Dorsolateral prefrontal cortex (tissue), 120 donors: ENCODE measurements at regions of chr6 and their contacts with region 1.

Region 1: DNA sequence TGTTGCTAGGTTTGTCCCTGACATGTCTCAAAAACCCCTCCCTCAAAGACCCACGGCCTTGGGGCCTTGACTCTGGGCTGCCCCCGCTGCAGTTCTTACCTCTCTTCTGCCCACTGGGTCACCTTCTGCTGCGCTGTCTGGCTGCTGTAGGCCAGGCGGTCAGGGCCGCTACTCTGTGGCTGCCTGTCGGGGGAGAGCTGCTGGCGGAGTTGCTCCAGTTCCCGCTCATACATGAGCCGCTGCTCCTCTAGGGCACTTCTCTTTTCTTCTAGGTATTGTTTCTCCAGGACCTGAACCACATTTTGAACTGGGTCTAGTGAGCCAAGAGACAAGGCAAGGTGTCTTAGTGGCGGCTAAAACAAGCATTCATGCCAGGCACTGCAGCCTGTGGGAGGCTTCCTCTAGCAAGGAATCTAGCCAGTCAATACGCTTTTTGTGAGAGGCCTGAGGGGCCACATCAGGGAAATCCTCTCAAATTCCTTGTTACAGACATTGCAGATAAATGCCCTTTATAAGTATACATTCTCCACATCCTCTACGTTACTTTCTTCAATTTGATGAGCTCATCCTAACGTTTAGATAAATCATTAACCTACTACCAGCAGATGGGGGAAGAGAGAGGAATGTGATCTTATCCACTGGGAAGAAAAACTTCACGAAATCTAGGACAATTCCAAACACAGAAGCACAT is 110.3 kb upstream of the NUP153 start:
- DNase-seq: no peak
- H3K4me3 ChIP-seq: no peak overlapping the region
- H3K27ac ChIP-seq: peak overlapping the region in 4 of 59 donors; percentile 1 to 20 (median 16)
- H3K27me3 ChIP-seq: no peaks in the 10 kb centered on the region
- CTCF ChIP-seq: peak in 9 of 56 donors; percentile 5 to 21 (median 10)

Region 2: DNA sequence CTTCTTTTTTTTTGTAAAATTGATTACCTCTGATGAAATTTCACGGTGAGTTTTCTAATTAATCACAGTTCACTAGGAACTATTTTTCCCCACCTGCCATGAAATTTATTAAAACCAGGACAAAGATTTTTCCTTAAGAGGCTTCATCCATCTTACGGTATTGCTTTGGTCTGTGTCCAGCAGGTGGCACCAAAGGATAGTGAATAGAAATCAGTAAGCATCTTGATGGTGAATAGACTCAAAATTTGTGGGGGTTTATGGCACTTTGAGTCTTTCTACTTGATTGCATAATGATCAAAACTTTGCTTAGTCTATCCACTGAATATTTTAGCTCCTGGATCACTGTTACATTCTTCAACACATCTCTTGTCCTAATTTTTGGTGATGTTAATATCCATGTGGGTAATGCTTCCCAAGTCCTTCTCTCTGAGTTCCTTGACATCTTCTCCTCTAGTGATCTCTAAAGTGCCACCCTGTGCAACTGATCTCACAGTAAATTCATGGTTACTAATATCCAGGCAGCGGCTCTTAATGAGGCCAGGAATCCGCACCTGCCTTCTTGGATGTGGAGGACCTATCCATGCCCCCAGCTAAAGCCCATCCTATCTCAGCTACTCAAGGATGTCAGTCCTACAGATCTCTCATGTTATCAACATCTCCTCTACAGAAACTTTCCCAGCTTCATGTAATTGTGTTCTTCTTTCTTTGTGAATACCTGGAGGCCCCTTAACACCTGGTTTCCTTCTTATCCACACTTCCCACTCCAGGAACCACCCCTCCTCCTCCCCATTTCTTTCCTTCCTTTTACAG is 660.7 kb before region 1 on chr6:
- intact Hi-C with region 1: loop called in 1 of 2 experiments (anchors 5 kb)
- DNase-seq: peak in 7 of 10 donors; percentile 63 to 91 (median 69)
- H3K4me3 ChIP-seq: no peak overlapping the region
- H3K27ac ChIP-seq: no peak overlapping the region
- H3K27me3 ChIP-seq: no peaks in the 10 kb centered on the region
- CTCF ChIP-seq: peak; percentile 72 to 98 (median 90)

Region 3: DNA sequence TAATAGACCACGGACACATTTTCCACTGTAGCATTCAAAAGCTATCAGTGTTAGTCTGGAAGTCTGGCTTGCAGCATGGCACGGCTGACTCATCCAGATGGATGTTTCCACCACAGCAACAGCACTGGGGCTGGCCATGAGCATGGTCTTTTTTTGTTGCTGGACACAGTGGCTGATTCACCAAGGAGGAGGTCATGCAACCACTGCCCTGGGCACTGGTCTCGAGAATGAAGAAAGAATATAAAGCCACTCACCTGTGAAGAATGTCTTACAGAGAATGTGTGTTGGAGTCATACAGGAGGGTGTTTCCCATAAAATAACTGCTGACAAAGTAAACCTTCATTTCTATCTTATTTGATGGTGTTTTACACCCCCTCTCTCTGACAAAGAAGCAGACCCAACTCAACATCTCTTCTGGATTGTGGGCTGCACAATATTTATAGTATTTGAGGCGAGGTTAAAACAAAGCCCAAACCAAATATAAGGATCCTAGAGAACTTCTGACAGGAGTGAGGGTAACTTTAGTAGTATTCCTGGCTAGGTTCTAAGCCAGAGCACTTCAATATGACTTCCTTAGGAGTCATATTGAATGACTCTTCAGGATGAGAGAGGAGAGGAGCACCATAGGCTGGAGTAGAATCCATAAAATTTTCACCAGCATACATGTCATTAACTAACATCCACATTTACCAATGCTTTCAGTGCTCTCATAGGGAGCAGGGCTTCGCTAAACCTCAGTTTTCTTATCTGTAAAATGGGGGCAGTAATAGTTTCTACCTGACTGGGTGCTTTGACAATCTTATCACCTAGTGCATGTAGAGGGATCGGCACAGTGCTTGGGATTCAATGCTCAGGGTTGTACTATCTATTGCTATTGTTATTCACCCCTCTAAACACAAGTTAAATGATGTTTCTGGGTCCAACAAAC is 49.0 kb after region 1 on chr6:
- intact Hi-C with region 1: loop called in 1 of 2 experiments (anchors 10 kb)
- DNase-seq: peak in 9 of 10 donors; percentile 47 to 88 (median 74)
- H3K4me3 ChIP-seq: peak overlapping the region in 1 of 59 donors; percentile 17
- H3K27ac ChIP-seq: peak overlapping the region; percentile 74 to 98 (median 93)
- H3K27me3 ChIP-seq: no peaks in the 10 kb centered on the region
- CTCF ChIP-seq: peak in 2 of 56 donors; percentile 12 to 22